CD8-positive, alpha-beta T cell (primary cell): ENCODE measurements at regions of chr12 and their contacts with region 1.

Region 1: GRCh38 chr12:27142101-27142721 is 59.8 kb upstream of the C12orf71 start:
- DNase-seq: peak in 7 of 9 experiments; percentile 9 to 73 (median 28)
- ATAC-seq: peak; percentile 51
- H3K4me3 ChIP-seq: no peak overlapping the region
- H3K4me3 Mint-ChIP-seq: no peak overlapping the region
- H3K27ac ChIP-seq: no peak overlapping the region
- H3K27ac Mint-ChIP-seq: no peak overlapping the region
- H3K4me1 ChIP-seq: no peaks in the 10 kb centered on the region
- H3K4me1 Mint-ChIP-seq: peaks cover 6% of the 10 kb centered on the region
- H3K27me3 ChIP-seq: no peaks in the 10 kb centered on the region
- H3K27me3 Mint-ChIP-seq: no peaks in the 10 kb centered on the region
- CTCF ChIP-seq: peak; percentile 81

Region 2: GRCh38 chr12:27024291-27024690 is 117.9 kb before region 1 on chr12:
- CTCF ChIA-PET with region 1: interaction called, 3 read pairs
- POLR2A ChIA-PET with region 1: no interaction called
- intact Hi-C with region 1: loop called in 1 of 2 experiments (anchors 5 kb)
- DNase-seq: no peak
- ATAC-seq: no peak
- H3K4me3 ChIP-seq: no peak overlapping the region
- H3K4me3 Mint-ChIP-seq: peak overlapping the region; percentile 26
- H3K27ac ChIP-seq: no peak overlapping the region
- H3K27ac Mint-ChIP-seq: no peak overlapping the region
- H3K4me1 ChIP-seq: peaks cover 21% of the 10 kb centered on the region
- H3K4me1 Mint-ChIP-seq: peaks cover 47% of the 10 kb centered on the region
- H3K27me3 ChIP-seq: no peaks in the 10 kb centered on the region
- H3K27me3 Mint-ChIP-seq: no peaks in the 10 kb centered on the region
- CTCF ChIP-seq: no peak

Region 3: GRCh38 chr12:27305673-27306456 is 163.7 kb after region 1 on chr12:
- CTCF ChIA-PET with region 1: interaction called, 4 read pairs
- POLR2A ChIA-PET with region 1: no interaction called
- intact Hi-C with region 1: loop called (anchors 5 kb)
- DNase-seq: peak in 2 of 9 experiments; percentile 46 to 62
- ATAC-seq: peak; percentile 34
- H3K4me3 ChIP-seq: no peak overlapping the region
- H3K4me3 Mint-ChIP-seq: no peak overlapping the region
- H3K27ac ChIP-seq: no peak overlapping the region
- H3K27ac Mint-ChIP-seq: no peak overlapping the region
- H3K4me1 ChIP-seq: no peaks in the 10 kb centered on the region
- H3K4me1 Mint-ChIP-seq: no peaks in the 10 kb centered on the region
- H3K27me3 ChIP-seq: no peaks in the 10 kb centered on the region
- H3K27me3 Mint-ChIP-seq: no peaks in the 10 kb centered on the region
- CTCF ChIP-seq: peak; percentile 89